ENCODE measurements at regions of chr10 and their contacts with region 1.

Region 1: GRCh38 chr10:61284222-61284890 is 168.8 kb downstream of the TMEM26 start:
- DNase-seq: no peak
- H3K4me3 ChIP-seq: no peak overlapping the region
- H3K27ac ChIP-seq: no peak overlapping the region
- H3K4me1 ChIP-seq: no peaks in the 10 kb centered on the region
- H3K27me3 ChIP-seq: no peaks in the 10 kb centered on the region
- CTCF ChIP-seq: peak; percentile 63

Region 2: DNA sequence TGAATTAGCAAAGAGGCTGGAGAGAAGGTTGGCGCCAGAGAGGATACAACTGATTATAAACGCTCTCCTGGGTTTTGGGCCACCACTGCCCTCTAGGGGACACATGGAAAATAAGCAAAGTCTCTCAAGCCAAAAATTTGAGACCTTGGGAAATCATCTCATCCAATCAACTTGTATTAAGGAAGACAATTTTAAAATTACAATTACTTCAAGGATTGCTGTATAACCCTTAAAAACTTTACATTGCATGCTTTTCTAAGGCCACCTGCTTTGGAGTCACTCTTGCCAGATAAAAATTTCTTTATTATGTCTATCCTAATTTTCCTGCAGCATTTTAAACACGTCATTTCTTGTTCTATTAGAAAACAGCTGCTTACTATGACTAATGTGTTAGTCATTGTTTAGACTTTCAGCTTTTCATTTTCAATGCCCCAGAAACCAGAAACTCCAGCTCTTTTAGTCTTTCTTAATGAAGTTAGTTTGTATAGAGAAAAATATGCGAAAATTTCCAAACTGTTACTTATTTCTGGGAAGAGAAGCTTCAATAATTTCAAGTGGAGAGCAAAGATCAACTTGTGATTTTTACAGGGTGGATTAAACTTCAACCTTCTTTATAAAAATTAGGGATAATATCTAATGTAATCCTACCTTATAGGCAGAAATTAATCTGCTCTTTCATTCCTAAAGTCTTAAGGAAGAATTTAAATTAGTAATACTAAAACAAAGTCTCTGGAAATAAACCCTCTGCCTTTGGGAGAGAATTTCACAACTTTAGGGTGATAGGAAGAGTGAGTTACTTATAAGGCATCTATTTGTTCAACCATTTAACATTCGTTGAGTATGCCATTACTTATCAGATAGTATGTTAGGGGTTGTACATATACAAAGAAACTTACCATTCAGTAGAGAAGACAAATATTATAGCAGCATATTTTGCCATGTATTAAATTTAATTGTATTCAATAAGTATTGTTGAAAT is 319.8 kb before region 1 on chr10:
- intact Hi-C with region 1: loop called (anchors 5 kb)
- DNase-seq: peak; percentile 75
- H3K4me3 ChIP-seq: no peak overlapping the region
- H3K27ac ChIP-seq: peak overlapping the region; percentile 10
- H3K4me1 ChIP-seq: no peaks in the 10 kb centered on the region
- H3K27me3 ChIP-seq: no peaks in the 10 kb centered on the region
- CTCF ChIP-seq: peak; percentile 78

Region 3: GRCh38 chr10:61140765-61141392 is 143.5 kb before region 1 on chr10:
- intact Hi-C with region 1: loop called (anchors 5 kb)
- DNase-seq: no peak
- H3K4me3 ChIP-seq: no peak overlapping the region
- H3K27ac ChIP-seq: no peak overlapping the region
- H3K4me1 ChIP-seq: no peaks in the 10 kb centered on the region
- H3K27me3 ChIP-seq: no peaks in the 10 kb centered on the region
- CTCF ChIP-seq: peak; percentile 47

Region 4: GRCh38 chr10:61175316-61175715 is 109.0 kb before region 1 on chr10:
- intact Hi-C with region 1: no loop called
- DNase-seq: no peak
- H3K4me3 ChIP-seq: no peak overlapping the region
- H3K27ac ChIP-seq: no peak overlapping the region
- H3K4me1 ChIP-seq: no peaks in the 10 kb centered on the region
- H3K27me3 ChIP-seq: no peaks in the 10 kb centered on the region
- CTCF ChIP-seq: no peak

Region 5: DNA sequence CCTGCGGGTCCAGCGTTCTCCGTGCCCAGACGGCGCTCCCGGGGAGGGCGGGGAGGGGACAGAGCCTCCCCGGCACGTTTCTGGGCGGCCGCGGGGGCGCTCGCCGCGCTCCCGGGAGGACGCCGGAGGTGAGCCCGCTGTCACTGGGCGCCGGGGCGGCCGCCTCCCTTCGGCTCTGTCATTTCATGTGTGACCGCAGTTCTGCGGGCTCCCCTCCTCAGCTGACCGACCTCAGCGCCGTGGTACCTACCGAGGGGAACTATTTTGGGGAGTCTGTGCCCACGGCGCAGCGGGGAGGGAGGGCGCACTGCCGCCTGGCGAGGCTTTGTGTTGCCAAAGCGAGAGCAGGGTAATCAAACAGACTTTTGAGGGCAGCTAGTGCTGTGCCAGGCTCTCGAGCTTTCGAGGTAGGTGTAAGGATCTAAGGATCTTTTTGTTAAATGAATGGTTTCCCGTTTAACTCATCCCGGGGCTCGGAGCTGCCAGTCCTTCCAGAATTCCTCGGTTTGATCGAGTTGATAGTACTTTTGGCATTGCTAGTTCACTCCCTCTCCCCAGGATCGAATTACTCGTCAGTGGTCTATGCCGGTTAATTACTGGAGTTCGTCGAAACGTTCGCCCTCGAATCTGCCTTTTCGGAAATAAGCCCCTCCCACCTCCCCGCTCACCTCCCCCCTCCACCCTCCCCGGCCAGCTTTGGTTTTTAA is 619.0 kb after region 1 on chr10:
- intact Hi-C with region 1: no loop called
- DNase-seq: peak; percentile 74
- H3K4me3 ChIP-seq: peak overlapping the region; percentile 51
- H3K27ac ChIP-seq: peak overlapping the region; percentile 93
- H3K4me1 ChIP-seq: peaks cover 8% of the 10 kb centered on the region
- H3K27me3 ChIP-seq: no peaks in the 10 kb centered on the region
- CTCF ChIP-seq: peak; percentile 17

Measured in colonic mucosa (tissue), 4 donors.